ENCODE measurements at regions of chr1 and their contacts with region 1.

Region 1: GRCh38 chr1:204819495-204819894 is 51.2 kb upstream of the NFASC start:
- DNase-seq: no peak
- H3K4me3 Mint-ChIP-seq: no peak overlapping the region
- H3K27ac Mint-ChIP-seq: no peak overlapping the region
- H3K4me1 Mint-ChIP-seq: no peaks in the 10 kb centered on the region
- H3K27me3 Mint-ChIP-seq: peaks cover 99% of the 10 kb centered on the region
- CTCF ChIP-seq: no peak

Region 2: DNA sequence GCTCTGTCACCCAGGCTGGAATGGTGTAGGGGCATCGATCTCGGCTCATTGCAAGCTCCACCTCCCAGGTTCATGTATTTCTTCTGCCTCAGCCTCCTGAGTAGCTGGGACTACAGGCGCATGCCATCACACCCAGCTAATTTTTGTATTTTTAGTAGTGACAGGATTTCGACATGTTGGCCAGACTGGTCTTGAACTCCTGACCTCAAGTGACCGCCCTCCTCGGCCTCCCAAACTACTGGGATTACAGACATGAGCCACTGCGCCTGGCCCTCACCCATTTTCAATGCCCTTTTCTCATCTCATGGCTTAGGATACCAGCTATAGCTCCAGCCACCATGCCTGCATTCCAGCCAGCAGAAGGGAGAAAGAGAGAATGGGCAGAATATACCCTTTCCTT is 759.5 kb before region 1 on chr1:
- CTCF ChIA-PET with region 1: interaction called, 10 read pairs
- intact Hi-C with region 1: no loop called
- DNase-seq: no peak
- H3K4me3 Mint-ChIP-seq: no peak overlapping the region
- H3K27ac Mint-ChIP-seq: no peak overlapping the region
- H3K4me1 Mint-ChIP-seq: peaks cover 19% of the 10 kb centered on the region
- H3K27me3 Mint-ChIP-seq: no peaks in the 10 kb centered on the region
- CTCF ChIP-seq: no peak

Region 3: DNA sequence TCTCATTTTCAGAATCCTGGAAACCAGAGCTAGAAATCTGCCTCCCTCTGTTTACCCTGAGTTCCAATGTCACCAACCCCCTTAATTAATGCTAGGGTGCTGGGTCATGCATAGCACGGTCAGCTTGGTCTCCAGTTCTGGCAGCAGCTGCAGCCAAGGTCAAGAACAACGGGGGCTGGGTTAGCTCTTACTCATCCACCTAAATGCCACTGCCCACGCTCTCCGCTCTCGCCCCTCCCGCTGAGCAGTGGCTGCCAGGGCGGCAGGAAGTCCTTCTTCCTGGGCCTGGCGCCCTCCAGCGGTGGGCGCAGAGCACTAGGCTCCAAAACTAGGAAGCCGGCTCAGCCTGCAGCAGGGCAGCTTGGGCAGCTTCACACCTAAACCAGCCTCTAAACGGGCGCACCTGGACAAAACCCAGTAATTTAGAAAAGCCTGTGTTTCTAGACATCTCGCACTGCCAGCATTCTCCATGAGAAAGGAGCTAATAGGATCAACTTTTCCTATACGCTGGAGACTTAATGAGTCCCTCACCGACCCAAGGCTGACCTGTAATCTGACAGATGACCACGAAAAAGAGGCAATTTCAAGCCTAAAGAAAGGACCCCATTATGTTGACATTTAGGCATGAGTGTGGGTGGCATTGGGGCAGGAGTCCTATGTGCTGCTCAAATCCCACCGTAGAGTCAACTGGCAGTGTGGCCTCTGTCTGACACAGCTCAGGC is 55.6 kb before region 1 on chr1:
- CTCF ChIA-PET with region 1: no interaction called
- intact Hi-C with region 1: no loop called
- DNase-seq: peak; percentile 90
- H3K4me3 Mint-ChIP-seq: no peak overlapping the region
- H3K27ac Mint-ChIP-seq: no peak overlapping the region
- H3K4me1 Mint-ChIP-seq: peaks cover 10% of the 10 kb centered on the region
- H3K27me3 Mint-ChIP-seq: peaks cover 87% of the 10 kb centered on the region
- CTCF ChIP-seq: peak; percentile 91